ENCODE measurements at regions of chr4 and their contacts with region 1.

Region 1: GRCh38 chr4:101865501-101866099 is 75.1 kb downstream of the BANK1 start:
- DNase-seq: peak; percentile 83
- ATAC-seq: peak; percentile 89
- H3K4me3 ChIP-seq: peak overlapping the region; percentile 1; the same call in 1 of the 2 replicates
- H3K27ac ChIP-seq: peak overlapping the region; percentile 91
- H3K4me1 ChIP-seq: peaks cover 24% of the 10 kb centered on the region
- H3K27me3 ChIP-seq: no peaks in the 10 kb centered on the region
- CTCF ChIP-seq: no peak

Region 2: DNA sequence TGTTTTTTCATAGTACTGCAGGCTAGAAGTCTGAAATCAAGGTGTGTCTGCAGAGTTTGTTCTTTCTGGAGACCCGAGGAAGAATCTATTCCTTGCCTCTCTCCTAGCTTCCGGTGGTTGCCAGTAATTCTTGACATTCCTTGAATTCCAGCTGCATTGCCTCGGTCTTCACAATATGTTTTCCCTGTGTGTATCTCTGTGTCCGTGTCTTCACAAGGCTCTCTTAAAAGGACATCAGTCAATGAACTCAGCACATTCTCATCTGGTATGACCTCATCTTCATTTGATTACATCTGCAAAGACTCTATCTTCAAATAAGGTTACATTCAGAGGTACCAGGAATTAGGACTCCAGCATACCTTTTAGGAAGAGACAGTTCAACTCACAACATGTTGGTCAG is 88.3 kb after region 1 on chr4:
- CTCF ChIA-PET with region 1: no interaction called
- POLR2A ChIA-PET with region 1: no interaction called
- intact Hi-C with region 1: no loop called
- DNase-seq: peak; percentile 62
- ATAC-seq: peak; percentile 53
- H3K4me3 ChIP-seq: no peak overlapping the region
- H3K27ac ChIP-seq: no peak overlapping the region
- H3K4me1 ChIP-seq: peaks cover 11% of the 10 kb centered on the region
- H3K27me3 ChIP-seq: no peaks in the 10 kb centered on the region
- CTCF ChIP-seq: no peak

Region 3: GRCh38 chr4:102196221-102196620 is 330.6 kb after region 1 on chr4:
- CTCF ChIA-PET with region 1: no interaction called
- POLR2A ChIA-PET with region 1: no interaction called
- intact Hi-C with region 1: no loop called
- DNase-seq: peak; percentile 15
- ATAC-seq: peak; percentile 50; the same call in 1 of the 2 replicates
- H3K4me3 ChIP-seq: no peak overlapping the region
- H3K27ac ChIP-seq: no peak overlapping the region
- H3K4me1 ChIP-seq: no peaks in the 10 kb centered on the region
- H3K27me3 ChIP-seq: no peaks in the 10 kb centered on the region
- CTCF ChIP-seq: no peak

Region 4: GRCh38 chr4:102217345-102217744 is 351.7 kb after region 1 on chr4:
- CTCF ChIA-PET with region 1: no interaction called
- POLR2A ChIA-PET with region 1: no interaction called
- intact Hi-C with region 1: loop called (anchors 1 kb)
- DNase-seq: peak; percentile 65
- ATAC-seq: peak; percentile 77
- H3K4me3 ChIP-seq: no peak overlapping the region
- H3K27ac ChIP-seq: no peak overlapping the region
- H3K4me1 ChIP-seq: peaks cover 26% of the 10 kb centered on the region
- H3K27me3 ChIP-seq: no peaks in the 10 kb centered on the region
- CTCF ChIP-seq: no peak

Measured in PC-3 (cell line).